Thyroid gland (tissue), 4 donors: ENCODE measurements at regions of chr16 and their contacts with region 1.

Region 1: DNA sequence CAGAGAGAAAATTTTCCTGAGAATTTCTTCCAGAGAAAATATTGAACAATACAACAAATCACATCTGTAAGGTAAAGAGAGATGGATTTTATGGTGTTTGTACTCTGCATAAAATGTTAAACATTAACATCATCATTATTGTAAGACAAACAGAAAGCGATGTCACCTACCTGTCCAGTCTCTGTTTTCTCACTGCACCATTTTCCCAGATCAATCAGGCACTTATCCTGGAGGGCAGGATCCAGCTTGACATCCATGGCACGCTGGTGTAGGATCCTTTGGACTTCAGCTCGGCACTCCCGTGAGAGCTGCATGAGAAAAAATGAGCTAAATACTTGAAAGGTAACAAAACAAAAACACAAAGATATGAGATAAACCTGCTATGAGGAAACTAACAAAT is 55.9 kb upstream of the CLEC18B start:
- DNase-seq: no peak
- H3K4me3 ChIP-seq: no peak overlapping the region
- H3K27ac ChIP-seq: no peak overlapping the region
- H3K4me1 ChIP-seq: peaks cover 16 to 17% of the 10 kb centered on the region in 2 donors
- H3K27me3 ChIP-seq: no peaks in the 10 kb centered on the region
- CTCF ChIP-seq: no peak
- POLR2A ChIP-seq: no peak

Region 2: GRCh38 chr16:74438492-74439041 is 38.7 kb before region 1 on chr16:
- intact Hi-C with region 1: no loop called
- DNase-seq: no peak
- H3K4me3 ChIP-seq: no peak overlapping the region
- H3K27ac ChIP-seq: no peak overlapping the region
- H3K4me1 ChIP-seq: no peaks in the 10 kb centered on the region
- H3K27me3 ChIP-seq: no peaks in the 10 kb centered on the region
- CTCF ChIP-seq: no peak
- POLR2A ChIP-seq: no peak

Region 3: GRCh38 chr16:74568961-74569631 is 91.9 kb after region 1 on chr16:
- intact Hi-C with region 1: no loop called
- DNase-seq: no peak
- H3K4me3 ChIP-seq: no peak overlapping the region
- H3K27ac ChIP-seq: no peak overlapping the region
- H3K4me1 ChIP-seq: peaks cover 0 to 35% of the 10 kb centered on the region in 2 donors
- H3K27me3 ChIP-seq: no peaks in the 10 kb centered on the region
- CTCF ChIP-seq: no peak
- POLR2A ChIP-seq: no peak

Region 4: DNA sequence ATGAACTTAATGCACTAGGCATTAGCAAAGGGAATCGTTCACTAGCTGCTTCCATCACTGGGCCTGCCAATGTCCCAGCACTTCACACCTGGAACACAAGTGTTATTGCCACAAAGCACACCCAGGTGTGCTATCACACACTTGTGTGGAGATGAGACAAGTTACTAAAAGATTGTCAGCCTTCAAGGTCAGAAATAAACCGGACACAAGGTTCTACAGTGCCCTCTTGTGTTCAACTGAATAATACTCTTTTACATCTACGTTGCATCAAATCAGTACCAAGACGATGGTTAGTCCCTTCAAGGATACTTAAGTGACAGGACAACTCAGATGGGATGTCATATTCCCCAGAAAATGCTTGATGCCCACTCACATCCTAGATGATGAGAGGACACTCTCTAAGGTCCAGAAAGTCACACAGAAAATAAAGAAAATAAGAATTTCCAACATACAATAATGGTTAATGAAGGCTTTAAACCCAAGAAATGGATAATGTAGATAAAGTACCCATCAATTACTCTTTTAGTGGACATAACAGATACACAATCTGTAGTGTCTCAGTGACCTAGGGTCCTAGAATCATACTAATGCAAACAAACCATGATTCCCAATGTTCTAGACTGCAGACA is 146.1 kb after region 1 on chr16:
- intact Hi-C with region 1: loop called (anchors 10 kb)
- DNase-seq: peak in 1 of 2 donors; percentile 12
- H3K4me3 ChIP-seq: no peak overlapping the region
- H3K27ac ChIP-seq: peak overlapping the region in 1 of 3 donors; percentile 29
- H3K4me1 ChIP-seq: peaks cover 3 to 24% of the 10 kb centered on the region in 2 donors
- H3K27me3 ChIP-seq: no peaks in the 10 kb centered on the region
- CTCF ChIP-seq: peak; percentile 28 to 82 (median 63)
- POLR2A ChIP-seq: no peak